Dorsolateral prefrontal cortex (tissue), 120 donors: ENCODE measurements at regions of chr15 and their contacts with region 1.

Region 1: DNA sequence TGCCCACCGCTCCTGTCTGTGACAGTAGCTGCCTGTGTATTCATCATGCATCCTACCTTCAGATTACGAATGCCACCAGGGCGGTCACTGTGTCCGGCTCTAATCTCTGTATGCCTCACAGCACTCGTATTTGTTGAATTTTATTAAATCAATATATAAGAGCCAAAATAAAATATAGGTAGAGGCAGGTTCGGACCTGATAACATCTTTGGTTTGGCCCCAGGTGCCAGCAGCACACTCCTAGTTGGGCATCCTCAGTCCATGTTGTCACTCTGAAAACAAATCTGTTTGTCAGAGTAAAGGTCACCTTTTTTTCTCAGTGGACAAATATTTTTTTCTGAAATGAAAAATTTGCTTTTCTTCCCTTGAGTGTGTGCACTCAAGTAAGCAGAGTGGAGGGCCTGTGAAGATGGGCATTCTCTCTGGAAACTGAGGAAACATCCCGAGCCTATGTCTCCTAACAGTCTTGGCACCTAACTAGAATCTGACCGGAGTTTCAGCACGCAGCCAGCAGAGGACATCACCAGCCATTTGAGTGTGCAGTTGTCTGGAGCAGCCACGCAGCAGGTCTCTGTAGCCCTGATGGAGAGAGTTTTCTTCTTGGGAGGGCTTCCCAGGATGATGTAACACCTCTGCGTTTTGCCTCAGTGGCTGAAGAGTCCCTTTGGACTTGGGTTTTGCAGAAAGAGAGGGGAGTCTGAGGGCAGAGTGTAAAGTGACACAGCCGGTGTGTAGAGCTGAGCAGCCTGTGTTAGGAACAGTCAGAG is 51.3 kb downstream of the ABHD2 start:
- DNase-seq: peak; percentile 40 to 73 (median 64)
- H3K4me3 ChIP-seq: peak overlapping the region in 2 of 59 donors; percentile 1 to 8
- H3K27ac ChIP-seq: peak overlapping the region in 58 of 59 donors; percentile 8 to 95 (median 85)
- H3K27me3 ChIP-seq: no peaks in the 10 kb centered on the region
- CTCF ChIP-seq: peak in 48 of 56 donors; percentile 19 to 65 (median 47)

Region 2: DNA sequence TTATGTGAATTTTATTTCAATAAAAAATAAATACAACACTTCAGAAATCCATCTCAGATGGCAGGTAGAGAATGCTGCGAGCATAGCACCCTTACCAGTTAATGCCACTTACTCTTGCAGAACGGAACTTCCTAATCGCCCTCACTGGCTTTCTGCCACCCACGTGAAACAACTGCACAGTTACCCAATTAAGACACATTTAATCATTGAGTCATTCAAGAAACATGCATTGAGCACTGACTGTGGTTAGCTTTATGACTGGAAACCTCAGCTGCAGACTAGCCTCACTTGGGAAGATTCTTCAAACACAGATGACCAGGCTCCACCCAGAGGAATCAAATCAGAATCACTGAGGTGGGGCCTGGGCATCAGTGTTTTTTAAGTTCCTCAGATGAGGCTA is 220.8 kb before region 1 on chr15:
- intact Hi-C with region 1: no loop called
- DNase-seq: no peak
- H3K4me3 ChIP-seq: no peak overlapping the region
- H3K27ac ChIP-seq: no peak overlapping the region
- H3K27me3 ChIP-seq: peaks cover 0 to 5% (median 0%) of the 10 kb centered on the region in 45 donors
- CTCF ChIP-seq: no peak

Region 3: GRCh38 chr15:89003865-89004725 is 135.5 kb before region 1 on chr15:
- intact Hi-C with region 1: no loop called
- DNase-seq: peak in 1 of 10 donors; percentile 35
- H3K4me3 ChIP-seq: no peak overlapping the region
- H3K27ac ChIP-seq: no peak overlapping the region
- H3K27me3 ChIP-seq: peaks cover 0 to 4% (median 0%) of the 10 kb centered on the region in 45 donors
- CTCF ChIP-seq: peak in 44 of 56 donors; percentile 9 to 64 (median 38)

Region 4: GRCh38 chr15:89090791-89091626 is 48.6 kb before region 1 on chr15:
- intact Hi-C with region 1: loop called in 1 of 2 experiments (anchors 5 kb)
- DNase-seq: peak in 7 of 10 donors; percentile 51 to 66 (median 62)
- H3K4me3 ChIP-seq: peak overlapping the region; percentile 18 to 100 (median 95)
- H3K27ac ChIP-seq: peak overlapping the region in 58 of 59 donors; percentile 69 to 97 (median 90)
- H3K27me3 ChIP-seq: no peaks in the 10 kb centered on the region
- CTCF ChIP-seq: peak in 18 of 56 donors; percentile 3 to 36 (median 18)

Region 5: DNA sequence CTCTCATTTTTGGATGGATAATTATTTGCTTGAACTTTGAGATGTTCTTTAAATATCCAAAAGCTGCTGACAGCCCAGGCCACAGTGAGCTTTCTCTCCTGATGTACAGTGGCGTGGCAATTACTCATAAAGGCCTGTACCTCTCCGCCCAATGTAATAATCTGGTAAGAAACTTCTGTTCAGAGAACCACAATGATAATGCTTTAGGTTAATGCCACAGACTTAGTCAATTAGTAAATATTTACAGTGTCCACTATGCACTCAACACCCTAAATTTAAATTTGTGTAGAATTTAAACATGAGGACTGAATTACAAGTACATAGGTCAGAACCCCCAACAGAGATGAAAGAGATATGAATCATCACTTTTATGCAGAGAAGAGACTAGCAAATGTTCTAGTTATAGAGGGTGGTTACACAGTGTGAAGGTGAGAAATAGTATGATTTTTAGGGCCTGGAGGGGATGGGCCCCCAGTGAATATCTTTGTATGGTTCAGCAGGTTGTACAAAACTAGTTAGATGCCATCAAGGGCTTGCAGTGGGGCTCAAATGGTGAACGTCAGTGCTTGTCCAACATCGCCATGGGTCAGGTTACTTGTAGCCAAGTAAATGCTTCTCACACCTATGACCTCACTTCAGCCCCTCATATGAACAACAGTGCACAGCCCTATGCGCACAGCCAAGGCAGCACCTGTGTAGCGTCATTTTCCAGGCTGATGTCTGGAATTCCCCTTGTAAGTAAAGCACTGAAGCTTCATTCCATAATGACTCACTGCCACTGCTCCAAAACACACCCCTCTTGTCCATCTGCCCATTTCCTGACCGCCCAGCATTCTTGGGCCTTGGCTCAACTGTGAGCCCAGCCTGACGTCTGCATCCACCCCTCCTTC is 38.0 kb before region 1 on chr15:
- intact Hi-C with region 1: no loop called
- DNase-seq: peak in 2 of 10 donors; percentile 48 to 51
- H3K4me3 ChIP-seq: peak overlapping the region in 1 of 59 donors; percentile 1
- H3K27ac ChIP-seq: peak overlapping the region in 56 of 59 donors; percentile 5 to 97 (median 81)
- H3K27me3 ChIP-seq: no peaks in the 10 kb centered on the region
- CTCF ChIP-seq: no peak